Mammary epithelial cell (primary cell): ENCODE measurements at regions of chr7 and their contacts with region 1.

Region 1: GRCh38 chr7:134724606-134725005 is 54.8 kb upstream of the CALD1 start:
- DNase-seq: peak; percentile 40
- H3K4me3 ChIP-seq: no peak overlapping the region
- H3K27ac ChIP-seq: no peak overlapping the region
- H3K4me1 ChIP-seq: no peaks in the 10 kb centered on the region
- H3K27me3 ChIP-seq: no peaks in the 10 kb centered on the region
- CTCF ChIP-seq: peak; percentile 76 to 88

Region 2: GRCh38 chr7:134755401-134756022 is 30.9 kb after region 1 on chr7:
- CTCF ChIA-PET with region 1: no interaction called
- dilution Hi-C with region 1: loop called (anchors 5 kb)
- in situ Hi-C with region 1: no loop called
- intact Hi-C with region 1: loop called (anchors 1 kb)
- DNase-seq: no peak
- H3K4me3 ChIP-seq: no peak overlapping the region
- H3K27ac ChIP-seq: no peak overlapping the region
- H3K4me1 ChIP-seq: peaks cover 17% of the 10 kb centered on the region
- H3K27me3 ChIP-seq: no peaks in the 10 kb centered on the region
- CTCF ChIP-seq: peak; percentile 69 to 71

Region 3: GRCh38 chr7:134789967-134790685 is 65.5 kb after region 1 on chr7:
- CTCF ChIA-PET with region 1: no interaction called
- dilution Hi-C with region 1: loop called (anchors 5 kb)
- in situ Hi-C with region 1: no loop called
- intact Hi-C with region 1: no loop called
- DNase-seq: no peak
- H3K4me3 ChIP-seq: no peak overlapping the region
- H3K27ac ChIP-seq: no peak overlapping the region
- H3K4me1 ChIP-seq: peaks cover 7% of the 10 kb centered on the region
- H3K27me3 ChIP-seq: no peaks in the 10 kb centered on the region
- CTCF ChIP-seq: no peak

Region 4: DNA sequence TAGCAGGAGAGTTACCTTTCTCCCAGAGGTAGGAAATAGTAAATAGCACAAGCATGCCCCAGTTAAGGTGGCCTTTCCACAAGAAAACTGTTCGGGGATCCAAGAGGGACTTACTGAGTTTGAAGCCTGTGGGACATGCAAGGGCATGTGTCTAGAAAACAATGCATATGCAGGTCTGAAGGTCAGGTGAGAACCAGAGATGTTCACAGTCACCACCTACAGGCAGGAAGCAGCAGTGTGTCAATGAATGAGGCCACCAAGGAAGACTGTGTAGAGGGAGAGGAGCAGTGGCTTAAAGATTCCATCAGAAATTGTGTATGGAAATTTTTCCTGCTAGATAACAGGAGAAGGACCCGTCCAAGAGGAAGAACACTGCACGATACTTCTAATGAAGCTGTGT is 120.9 kb after region 1 on chr7:
- CTCF ChIA-PET with region 1: interaction called, 8 read pairs
- dilution Hi-C with region 1: no loop called
- in situ Hi-C with region 1: no loop called
- intact Hi-C with region 1: loop called (anchors 1 kb)
- DNase-seq: peak; percentile 73
- H3K4me3 ChIP-seq: no peak overlapping the region
- H3K27ac ChIP-seq: peak overlapping the region; percentile 59
- H3K4me1 ChIP-seq: peaks cover 26% of the 10 kb centered on the region
- H3K27me3 ChIP-seq: no peaks in the 10 kb centered on the region
- CTCF ChIP-seq: peak; percentile 81 to 84

Region 5: DNA sequence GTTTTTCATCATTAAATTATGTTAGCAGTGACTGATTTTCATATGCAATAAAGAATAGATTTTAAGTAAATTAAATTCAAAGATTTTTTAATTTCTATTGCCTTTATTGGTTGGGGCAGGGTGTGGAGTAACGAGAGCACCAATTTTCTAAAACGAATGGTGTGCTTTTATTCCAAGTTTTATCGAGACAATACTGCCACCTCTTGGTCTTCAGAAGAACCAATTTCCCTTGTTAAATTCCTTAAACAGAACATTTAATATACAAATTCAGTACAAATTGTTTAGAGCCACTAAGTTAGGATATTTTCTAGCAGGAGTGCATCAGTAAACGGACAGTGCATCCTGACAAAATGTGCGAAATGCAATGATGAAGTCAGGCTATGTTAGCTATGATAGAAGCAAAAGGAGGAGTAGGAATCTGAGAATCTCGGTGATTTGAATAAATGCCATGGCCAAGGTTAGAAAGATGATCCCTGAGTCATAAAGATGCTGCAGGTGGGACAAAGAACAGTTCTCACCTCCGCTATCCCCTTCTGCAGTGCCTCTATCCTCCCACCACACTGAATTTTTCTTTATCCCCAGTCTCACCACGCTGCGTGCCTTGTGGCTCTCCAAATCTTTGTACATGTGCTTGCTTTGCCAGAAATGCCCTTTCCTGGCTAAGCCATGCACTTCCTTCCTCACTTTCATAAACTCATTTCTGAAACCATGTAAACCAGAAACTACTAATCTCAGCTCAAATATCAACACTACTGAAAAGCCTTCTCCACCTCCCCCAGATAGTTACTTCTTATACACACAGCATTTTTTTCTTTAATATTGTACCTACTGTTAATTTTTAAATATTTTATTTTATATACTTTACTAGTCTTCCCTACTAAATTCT is 229.8 kb after region 1 on chr7:
- CTCF ChIA-PET with region 1: no interaction called
- dilution Hi-C with region 1: no loop called
- in situ Hi-C with region 1: no loop called
- intact Hi-C with region 1: loop called (anchors 1 kb)
- DNase-seq: no peak
- H3K4me3 ChIP-seq: no peak overlapping the region
- H3K27ac ChIP-seq: no peak overlapping the region
- H3K4me1 ChIP-seq: no peaks in the 10 kb centered on the region
- H3K27me3 ChIP-seq: no peaks in the 10 kb centered on the region
- CTCF ChIP-seq: peak; percentile 34 to 47

Region 6: GRCh38 chr7:135164357-135165061 is 439.9 kb after region 1 on chr7:
- CTCF ChIA-PET with region 1: interaction called, 44 read pairs
- dilution Hi-C with region 1: no loop called
- in situ Hi-C with region 1: no loop called
- intact Hi-C with region 1: no loop called
- DNase-seq: no peak
- H3K4me3 ChIP-seq: no peak overlapping the region
- H3K27ac ChIP-seq: no peak overlapping the region
- H3K4me1 ChIP-seq: peaks cover 14% of the 10 kb centered on the region
- H3K27me3 ChIP-seq: no peaks in the 10 kb centered on the region
- CTCF ChIP-seq: no peak